Esophagus squamous epithelium (tissue), 5 donors: ENCODE measurements at regions of chr10 and their contacts with region 1.

Region 1: GRCh38 chr10:33330543-33331378 is 3.7 kb downstream of the NRP1 start:
- DNase-seq: no peak
- H3K4me3 ChIP-seq: peak overlapping the region in 3 of 4 donors; percentile 72 to 87 (median 75)
- H3K27ac ChIP-seq: peak overlapping the region in 3 of 4 donors; percentile 36 to 92 (median 92)
- H3K4me1 ChIP-seq: peaks cover 0 to 75% (median 10%) of the 10 kb centered on the region in 3 donors
- H3K27me3 ChIP-seq: peaks cover 0 to 10% (median 0%) of the 10 kb centered on the region in 4 donors
- CTCF ChIP-seq: peak; percentile 69 to 91 (median 86)
- POLR2A ChIP-seq: no peak

Region 2: GRCh38 chr10:33193057-33193700 is 137.6 kb before region 1 on chr10:
- intact Hi-C with region 1: loop called (anchors 10 kb)
- DNase-seq: peak; percentile 11
- H3K4me3 ChIP-seq: no peak overlapping the region
- H3K27ac ChIP-seq: peak overlapping the region in 3 of 4 donors; percentile 41 to 62 (median 60)
- H3K4me1 ChIP-seq: peaks cover 7 to 45% (median 11%) of the 10 kb centered on the region in 3 donors
- H3K27me3 ChIP-seq: no peaks in the 10 kb centered on the region
- CTCF ChIP-seq: peak; percentile 59 to 79 (median 74)
- POLR2A ChIP-seq: no peak

Region 3: GRCh38 chr10:33248638-33249037 is 82.1 kb before region 1 on chr10:
- intact Hi-C with region 1: no loop called
- DNase-seq: no peak
- H3K4me3 ChIP-seq: no peak overlapping the region
- H3K27ac ChIP-seq: peak overlapping the region in 3 of 4 donors; percentile 23 to 65 (median 51)
- H3K4me1 ChIP-seq: peaks cover 0 to 24% (median 0%) of the 10 kb centered on the region in 3 donors
- H3K27me3 ChIP-seq: no peaks in the 10 kb centered on the region
- CTCF ChIP-seq: no peak
- POLR2A ChIP-seq: no peak

Region 4: GRCh38 chr10:34637418-34637911 is 1306.7 kb after region 1 on chr10:
- intact Hi-C with region 1: loop called (anchors 10 kb)
- DNase-seq: no peak
- H3K4me3 ChIP-seq: no peak overlapping the region
- H3K27ac ChIP-seq: no peak overlapping the region
- H3K4me1 ChIP-seq: peaks cover 0 to 51% (median 3%) of the 10 kb centered on the region in 3 donors
- H3K27me3 ChIP-seq: no peaks in the 10 kb centered on the region
- CTCF ChIP-seq: peak; percentile 63 to 97 (median 90)
- POLR2A ChIP-seq: no peak